Right ventricle myocardium inferior (tissue), 1 donor: ENCODE measurements at regions of chr10 and their contacts with region 1.

Region 1: DNA sequence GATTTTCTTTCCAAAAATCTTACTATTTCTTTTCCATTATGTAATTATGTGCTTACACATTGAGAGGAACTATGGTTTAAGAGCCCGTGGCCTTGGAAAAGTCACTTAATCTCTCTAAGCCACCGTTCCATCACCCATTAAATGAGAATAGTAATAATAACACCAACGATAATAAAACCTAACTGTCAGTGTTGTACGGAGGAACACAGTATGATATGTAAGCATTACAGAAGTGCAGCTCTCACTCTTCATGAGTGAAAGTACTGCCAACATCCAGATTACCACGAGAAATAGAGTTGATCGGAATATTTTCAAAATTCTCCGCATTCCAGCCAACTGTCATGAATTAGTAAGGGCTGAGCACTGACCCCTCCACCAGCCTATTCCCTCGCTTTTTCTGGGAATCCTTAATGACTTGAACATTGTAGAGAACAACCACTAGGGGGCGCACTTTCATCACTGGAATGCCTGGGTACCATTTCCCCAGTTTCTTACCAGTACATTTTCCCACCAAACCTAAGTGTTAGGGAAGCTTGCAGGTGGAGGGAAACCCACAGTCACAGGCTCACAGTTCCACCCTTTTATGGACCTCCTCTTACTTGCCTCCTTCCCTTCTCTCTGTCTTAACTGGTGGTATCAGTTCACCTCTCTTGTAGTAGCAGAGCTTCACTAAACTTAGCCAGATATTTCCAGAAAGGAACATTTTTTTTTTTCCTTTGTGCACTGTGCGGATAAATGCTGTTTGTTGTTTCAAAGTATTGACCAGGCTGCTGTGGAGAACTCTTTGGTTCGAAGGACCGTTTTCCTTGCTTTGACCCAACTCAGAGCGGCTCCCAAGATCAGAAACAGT is 27.8 kb downstream of the NKX2-3 start:
- DNase-seq: no peak
- ATAC-seq: no peak

Region 2: GRCh38 chr10:98924526-98924925 is 636.0 kb before region 1 on chr10:
- intact Hi-C with region 1: no loop called
- DNase-seq: no peak
- ATAC-seq: no peak

Region 3: GRCh38 chr10:98980353-98980752 is 580.1 kb before region 1 on chr10:
- intact Hi-C with region 1: no loop called
- DNase-seq: no peak
- ATAC-seq: no peak

Region 4: GRCh38 chr10:99709480-99710229 is 149.2 kb after region 1 on chr10:
- intact Hi-C with region 1: loop called (anchors 10 kb)
- DNase-seq: no peak
- ATAC-seq: no peak